Ovary (tissue), 10 donors: ENCODE measurements at regions of chr20 and their contacts with region 1.

Region 1: GRCh38 chr20:50172347-50173013 is 18.1 kb upstream of the CEBPB start:
- DNase-seq: peak; percentile 86 to 92 (median 90)
- H3K4me3 ChIP-seq: peak overlapping the region; percentile 61
- H3K27ac ChIP-seq: peak overlapping the region; percentile 37 to 73
- H3K4me1 ChIP-seq: peaks cover 3% of the 10 kb centered on the region
- H3K27me3 ChIP-seq: no peaks in the 10 kb centered on the region
- CTCF ChIP-seq: no peak
- EP300 ChIP-seq: no peak
- POLR2A ChIP-seq: peak; percentile 76

Region 2: DNA sequence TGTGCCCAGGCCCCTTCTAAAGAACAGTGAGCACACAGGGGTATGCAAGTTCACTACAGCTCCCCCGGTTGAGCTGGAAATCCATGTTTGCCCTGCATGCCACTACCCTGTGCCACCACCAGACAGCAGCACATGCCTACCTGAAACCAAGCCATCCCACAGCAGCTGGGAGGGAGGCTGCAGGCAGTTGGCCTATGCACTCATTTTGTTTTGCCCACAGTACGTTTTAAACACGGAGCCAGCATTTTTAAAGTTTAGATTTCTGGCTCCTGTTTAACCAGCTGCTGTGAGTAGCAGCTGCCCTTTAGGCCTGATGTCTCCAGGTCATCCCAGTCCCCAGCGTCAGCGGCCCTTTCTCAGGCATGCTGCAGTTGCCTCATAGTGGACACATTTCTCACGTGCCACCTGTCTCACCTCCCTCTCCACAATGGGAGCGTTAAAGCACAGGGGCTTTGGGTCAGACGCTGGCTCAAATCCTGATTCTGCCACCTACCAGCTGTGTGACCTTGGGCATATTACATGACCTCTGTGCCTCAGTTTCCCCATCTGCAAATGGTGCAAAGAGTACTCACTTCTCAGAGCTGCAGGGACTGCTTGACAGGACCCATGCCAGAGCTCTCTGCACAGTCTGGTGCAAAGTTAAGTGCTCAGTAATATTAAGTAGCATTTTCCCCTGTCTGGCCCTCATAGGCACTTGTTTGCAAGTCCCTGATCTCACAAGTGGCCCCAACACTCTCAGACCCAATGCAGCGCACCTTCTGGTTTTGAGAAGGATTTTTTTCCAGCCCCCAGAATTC is 51.4 kb before region 1 on chr20:
- intact Hi-C with region 1: loop called in 2 of 4 experiments (anchors 5 kb)
- DNase-seq: peak in 4 of 5 donors; percentile 39 to 55 (median 50)
- H3K4me3 ChIP-seq: no peak overlapping the region
- H3K27ac ChIP-seq: no peak overlapping the region
- H3K4me1 ChIP-seq: no peaks in the 10 kb centered on the region
- H3K27me3 ChIP-seq: no peaks in the 10 kb centered on the region
- CTCF ChIP-seq: peak in 2 of 3 donors; percentile 46 to 66
- EP300 ChIP-seq: no peak
- POLR2A ChIP-seq: no peak